ENCODE measurements at regions of chr7 and their contacts with region 1.

Region 1: GRCh38 chr7:116924741-116925140 is 28.6 kb upstream of the ST7 start:
- DNase-seq: no peak
- H3K4me3 ChIP-seq: no peak overlapping the region
- H3K27ac ChIP-seq: no peak overlapping the region; the same call in 1 of the 2 replicates
- H3K4me1 ChIP-seq: no peaks in the 10 kb centered on the region
- H3K27me3 ChIP-seq: no peaks in the 10 kb centered on the region
- CTCF ChIP-seq: no peak

Region 2: DNA sequence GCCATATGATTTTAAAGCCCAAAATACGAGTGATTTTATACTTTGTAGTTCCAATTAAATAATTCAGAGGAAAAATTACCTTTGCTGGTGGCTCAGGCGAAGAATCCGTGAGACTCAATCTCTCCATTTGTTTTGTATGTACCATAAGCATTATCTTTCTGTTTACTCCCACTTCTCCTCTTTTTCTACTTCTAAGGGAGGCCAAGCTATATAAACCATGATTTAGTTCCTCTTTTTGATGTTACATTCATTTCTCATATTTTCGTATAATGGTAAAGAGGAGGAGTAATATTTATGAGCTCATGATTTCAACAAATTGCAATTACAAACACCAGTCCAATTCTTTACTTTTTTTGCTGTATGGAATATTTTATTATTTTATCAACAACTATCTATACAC is 765.0 kb before region 1 on chr7:
- CTCF ChIA-PET with region 1: no interaction called
- POLR2A ChIA-PET with region 1: no interaction called
- intact Hi-C with region 1: loop called (anchors 5 kb)
- DNase-seq: no peak
- H3K4me3 ChIP-seq: no peak overlapping the region
- H3K27ac ChIP-seq: no peak overlapping the region
- H3K4me1 ChIP-seq: no peaks in the 10 kb centered on the region
- H3K27me3 ChIP-seq: no peaks in the 10 kb centered on the region
- CTCF ChIP-seq: no peak

Measured in PC-9 (cell line).